PC-3 (cell line): ENCODE measurements at regions of chr7 and their contacts with region 1.

Region 1: GRCh38 chr7:33685981-33686683 is 219.2 kb upstream of the BMPER start:
- DNase-seq: no peak
- ATAC-seq: no peak
- H3K4me3 ChIP-seq: no peak overlapping the region
- H3K27ac ChIP-seq: no peak overlapping the region
- H3K4me1 ChIP-seq: no peaks in the 10 kb centered on the region
- H3K27me3 ChIP-seq: no peaks in the 10 kb centered on the region
- CTCF ChIP-seq: no peak

Region 2: DNA sequence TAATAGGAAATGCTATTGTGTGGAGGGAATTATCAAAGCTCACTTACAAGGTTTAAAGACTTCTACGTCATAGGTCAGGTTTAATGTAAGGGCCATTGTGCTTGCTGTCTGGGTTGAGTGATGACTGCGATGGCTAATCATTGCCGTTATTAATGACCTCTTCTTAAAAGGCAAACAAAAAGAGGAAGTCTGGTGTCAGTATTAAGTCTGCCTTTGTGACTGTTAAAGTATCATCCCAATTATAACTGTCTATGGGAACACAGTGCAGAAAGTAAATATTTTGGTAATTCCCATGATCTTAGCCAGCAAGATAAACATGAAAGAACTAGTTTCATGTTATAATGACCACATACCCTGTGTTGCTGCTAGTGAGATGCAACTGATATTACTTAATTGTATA is 174.4 kb before region 1 on chr7:
- CTCF ChIA-PET with region 1: no interaction called
- POLR2A ChIA-PET with region 1: no interaction called
- intact Hi-C with region 1: no loop called
- DNase-seq: no peak
- ATAC-seq: no peak
- H3K4me3 ChIP-seq: no peak overlapping the region
- H3K27ac ChIP-seq: no peak overlapping the region
- H3K4me1 ChIP-seq: no peaks in the 10 kb centered on the region
- H3K27me3 ChIP-seq: no peaks in the 10 kb centered on the region
- CTCF ChIP-seq: no peak

Region 3: DNA sequence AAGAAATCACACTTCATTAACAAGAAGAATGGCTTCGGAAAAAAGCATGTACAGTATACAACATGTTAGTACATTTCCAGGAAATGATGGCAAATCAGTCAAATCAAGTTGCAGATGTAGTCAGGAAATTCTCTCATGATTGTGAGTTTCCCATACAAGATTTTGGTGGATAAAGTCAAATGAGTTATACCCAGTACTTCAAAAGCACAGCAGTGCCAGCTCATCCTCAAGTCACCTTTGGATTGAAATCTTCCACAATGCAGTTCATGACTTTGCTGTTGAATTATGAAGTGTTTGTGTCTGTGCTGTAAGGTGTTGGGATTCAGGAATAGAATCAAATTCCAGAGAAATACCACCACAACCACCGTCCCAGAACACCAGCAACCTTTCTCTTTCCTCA is 82.1 kb before region 1 on chr7:
- CTCF ChIA-PET with region 1: no interaction called
- POLR2A ChIA-PET with region 1: no interaction called
- intact Hi-C with region 1: no loop called
- DNase-seq: no peak
- ATAC-seq: no peak
- H3K4me3 ChIP-seq: no peak overlapping the region
- H3K27ac ChIP-seq: no peak overlapping the region
- H3K4me1 ChIP-seq: no peaks in the 10 kb centered on the region
- H3K27me3 ChIP-seq: no peaks in the 10 kb centered on the region
- CTCF ChIP-seq: no peak

Region 4: GRCh38 chr7:33650828-33651227 is 35.3 kb before region 1 on chr7:
- CTCF ChIA-PET with region 1: no interaction called
- POLR2A ChIA-PET with region 1: no interaction called
- intact Hi-C with region 1: no loop called
- DNase-seq: no peak
- ATAC-seq: no peak
- H3K4me3 ChIP-seq: no peak overlapping the region
- H3K27ac ChIP-seq: no peak overlapping the region
- H3K4me1 ChIP-seq: no peaks in the 10 kb centered on the region
- H3K27me3 ChIP-seq: no peaks in the 10 kb centered on the region
- CTCF ChIP-seq: no peak

Region 5: DNA sequence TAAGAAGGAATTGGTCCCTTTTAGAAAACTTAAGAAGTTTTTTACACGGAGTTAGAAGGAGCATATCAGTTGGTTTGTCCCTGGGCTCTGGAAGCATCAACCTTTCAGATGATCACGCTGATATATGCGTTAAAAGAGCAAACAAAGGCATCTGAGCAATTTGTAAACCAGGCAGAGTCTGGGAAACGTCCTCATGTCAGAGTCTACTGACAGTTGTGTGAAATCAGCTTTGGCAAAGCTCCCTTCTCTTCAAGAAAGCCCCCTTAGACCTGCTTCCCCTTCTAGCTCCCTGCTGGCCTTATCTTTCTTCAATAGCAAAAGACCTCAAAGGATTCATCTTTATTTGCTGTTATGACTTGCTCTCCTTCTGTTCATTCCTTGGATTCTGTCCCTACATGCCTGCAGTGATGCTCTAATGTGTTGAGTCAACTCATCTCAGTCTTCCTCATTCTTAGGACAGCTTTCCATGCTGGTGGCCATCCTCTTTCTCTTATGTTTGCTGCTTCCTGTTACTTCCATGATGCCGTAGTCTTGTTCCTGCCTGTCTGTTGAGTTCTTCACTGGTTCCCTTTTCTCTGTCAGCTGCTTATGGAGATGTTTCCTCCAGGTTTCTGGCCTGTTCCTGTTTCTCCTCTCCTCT is 112.7 kb after region 1 on chr7:
- CTCF ChIA-PET with region 1: no interaction called
- POLR2A ChIA-PET with region 1: interaction called, 11 read pairs
- intact Hi-C with region 1: no loop called
- DNase-seq: no peak
- ATAC-seq: no peak
- H3K4me3 ChIP-seq: no peak overlapping the region
- H3K27ac ChIP-seq: no peak overlapping the region
- H3K4me1 ChIP-seq: no peaks in the 10 kb centered on the region
- H3K27me3 ChIP-seq: no peaks in the 10 kb centered on the region
- CTCF ChIP-seq: no peak